Lower leg skin (tissue), 4 donors: ENCODE measurements at regions of chr17 and their contacts with region 1.

Region 1: DNA sequence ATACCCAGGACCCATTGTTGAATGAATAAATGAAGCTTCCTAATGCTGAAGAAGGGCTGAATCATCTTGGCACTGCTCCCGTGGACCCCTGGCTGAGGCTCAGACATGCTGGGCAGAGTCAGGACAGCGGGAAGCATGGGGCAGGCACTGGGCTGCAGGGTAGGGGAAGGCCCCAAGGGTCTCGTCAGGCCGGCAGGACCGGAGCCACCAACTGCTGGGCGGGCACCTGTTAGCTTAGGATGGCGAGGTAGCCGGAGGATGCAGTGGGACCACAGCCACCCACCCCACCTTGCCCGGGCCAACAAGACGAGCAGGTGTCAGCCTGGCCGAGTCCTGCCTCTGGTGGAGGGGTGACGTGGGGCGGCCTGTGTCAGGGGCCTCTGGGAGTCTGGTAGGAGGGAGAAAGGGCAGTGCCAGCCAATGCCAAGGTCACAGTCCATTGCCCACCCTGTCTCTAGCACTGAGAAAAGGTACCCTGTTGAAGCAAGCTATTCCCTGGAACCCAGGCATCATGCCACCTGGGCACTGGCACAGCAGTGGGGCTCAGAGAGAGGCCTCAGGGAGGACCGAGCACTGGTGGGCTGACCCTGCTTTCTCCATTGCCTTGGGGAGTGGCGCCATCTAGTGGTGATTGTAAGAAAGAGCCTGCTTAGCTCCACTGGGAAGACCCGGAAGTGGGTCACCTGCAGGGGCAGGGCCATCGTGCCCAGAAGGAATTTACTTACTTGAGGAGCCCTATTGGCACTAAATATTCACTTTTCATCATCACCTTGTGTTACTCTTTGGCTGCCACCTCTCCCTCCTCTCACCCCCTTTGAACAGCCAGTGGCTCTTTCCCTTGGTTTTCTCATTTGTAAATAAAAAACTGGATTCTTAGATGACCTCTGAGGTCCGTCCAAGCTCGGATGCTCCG is 3.0 kb upstream of the DLX3 start:
- DNase-seq: peak; percentile 72 to 93
- H3K4me3 ChIP-seq: no peak overlapping the region
- CTCF ChIP-seq: peak in 1 of 3 donors; percentile 87
- POLR2A ChIP-seq: no peak

Region 2: GRCh38 chr17:49574323-49574781 is 423.7 kb before region 1 on chr17:
- intact Hi-C with region 1: loop called (anchors 5 kb)
- DNase-seq: no peak
- H3K4me3 ChIP-seq: no peak overlapping the region
- CTCF ChIP-seq: no peak
- POLR2A ChIP-seq: no peak

Region 3: DNA sequence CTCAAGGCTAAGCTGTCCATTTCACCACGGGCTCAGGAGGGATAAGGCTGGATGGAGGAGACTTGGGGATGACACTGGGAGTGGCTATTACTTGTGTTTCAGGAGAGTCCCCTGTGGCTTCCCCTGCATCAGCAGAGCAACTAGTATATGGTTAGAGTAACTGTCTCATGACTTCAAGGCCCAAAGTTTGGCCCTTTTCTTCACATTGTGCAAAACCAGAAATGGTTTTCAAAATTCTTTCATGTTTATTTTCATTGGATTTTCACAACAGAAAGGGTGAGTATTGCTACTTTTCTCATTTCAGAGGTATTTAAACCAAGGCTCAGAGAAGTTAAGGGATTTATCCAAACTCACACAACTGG is 132.0 kb before region 1 on chr17:
- intact Hi-C with region 1: loop called (anchors 5 kb)
- DNase-seq: no peak
- H3K4me3 ChIP-seq: no peak overlapping the region
- CTCF ChIP-seq: no peak
- POLR2A ChIP-seq: no peak

Region 4: DNA sequence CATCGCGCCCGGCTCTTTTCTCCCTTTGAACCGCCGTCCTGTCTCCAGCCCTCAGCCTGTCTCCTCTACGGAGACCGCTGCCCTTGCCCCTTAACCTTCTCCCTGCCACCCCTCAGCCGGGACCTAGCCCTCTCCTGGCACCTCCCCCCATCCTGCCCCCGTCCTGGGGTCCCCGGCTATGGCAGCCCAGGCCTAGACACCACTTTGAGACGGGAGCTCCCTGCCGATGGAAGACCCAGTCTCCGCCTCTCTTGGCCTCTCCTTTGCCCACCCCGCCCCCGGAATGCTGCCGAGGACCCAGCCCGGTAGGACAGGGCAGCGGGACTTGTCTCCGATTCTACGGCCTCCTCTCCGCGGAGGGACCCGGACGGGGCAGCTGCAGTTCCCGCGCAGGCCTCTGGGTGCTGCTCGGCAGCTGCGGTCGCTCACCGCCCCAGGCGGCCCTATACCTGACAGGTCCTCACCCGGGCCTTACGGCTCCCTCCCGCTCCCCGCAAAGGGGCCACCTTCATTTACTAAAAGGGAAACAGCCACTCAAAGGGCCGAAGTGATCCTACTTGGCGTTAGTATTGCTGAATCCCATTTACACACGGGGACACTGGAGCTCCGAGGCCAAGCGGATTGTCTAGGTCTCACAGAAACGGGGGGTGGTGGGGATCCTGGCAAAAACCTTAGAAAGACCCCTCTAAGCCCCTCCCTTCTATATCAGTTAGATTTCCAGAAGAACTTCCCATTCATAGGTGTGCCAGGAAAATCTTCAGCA is 117.6 kb before region 1 on chr17:
- intact Hi-C with region 1: loop called (anchors 5 kb)
- DNase-seq: peak; percentile 46 to 94
- H3K4me3 ChIP-seq: no peak overlapping the region
- CTCF ChIP-seq: peak in 2 of 3 donors; percentile 83 to 91
- POLR2A ChIP-seq: no peak

Region 5: GRCh38 chr17:49952209-49952911 is 45.7 kb before region 1 on chr17:
- intact Hi-C with region 1: loop called (anchors 5 kb)
- DNase-seq: peak; percentile 83 to 95
- H3K4me3 ChIP-seq: no peak overlapping the region
- CTCF ChIP-seq: no peak
- POLR2A ChIP-seq: no peak